Kidney (tissue), 22 donors: ENCODE measurements at regions of chr17 and their contacts with region 1.

Region 1: DNA sequence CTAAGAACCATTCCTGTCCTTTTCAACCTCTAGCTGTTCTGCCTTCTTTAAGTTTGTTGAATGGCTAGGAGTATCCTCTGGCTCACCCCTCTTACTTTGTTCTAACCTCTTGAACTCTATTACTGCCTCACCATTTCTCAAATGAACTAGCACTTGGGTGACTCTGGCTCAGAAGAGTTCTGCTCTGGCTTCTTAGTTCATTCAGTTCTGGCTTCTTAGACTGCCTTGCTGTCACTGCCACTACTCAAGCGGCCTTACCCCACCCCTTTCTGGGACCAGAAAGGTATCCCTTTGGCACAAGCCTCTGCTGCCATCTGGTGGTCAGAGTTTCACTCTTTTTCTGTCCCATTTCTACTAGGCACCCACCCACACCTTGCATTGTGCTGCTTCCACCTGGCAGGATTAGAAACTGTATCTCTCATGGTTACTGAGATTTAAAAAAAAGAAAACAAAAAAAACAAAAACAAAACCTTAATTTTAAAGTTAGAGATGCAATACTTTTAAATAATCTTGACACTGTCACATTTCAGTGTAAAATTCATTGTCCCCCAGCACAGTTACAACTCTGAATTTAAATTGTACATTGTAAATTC is 6.8 kb upstream of the ABCA10 start:
- DNase-seq: peak; percentile 83 to 94 (median 88)
- H3K4me3 ChIP-seq: no peak overlapping the region
- H3K27ac ChIP-seq: no peak overlapping the region
- H3K4me1 ChIP-seq: no peaks in the 10 kb centered on the region
- H3K27me3 ChIP-seq: no peaks in the 10 kb centered on the region
- CTCF ChIP-seq: peak; percentile 76

Region 2: GRCh38 chr17:68771867-68772515 is 463.4 kb before region 1 on chr17:
- intact Hi-C with region 1: loop called (anchors 5 kb)
- DNase-seq: peak in 2 of 5 donors; percentile 72 to 81
- H3K4me3 ChIP-seq: peak overlapping the region in 2 of 3 donors; percentile 20 to 48
- H3K27ac ChIP-seq: peak overlapping the region in 1 of 2 donors; percentile 37
- H3K4me1 ChIP-seq: no peaks in the 10 kb centered on the region
- H3K27me3 ChIP-seq: no peaks in the 10 kb centered on the region
- CTCF ChIP-seq: peak; percentile 73

Region 3: GRCh38 chr17:68777243-68777855 is 458.1 kb before region 1 on chr17:
- intact Hi-C with region 1: loop called (anchors 5 kb)
- DNase-seq: peak in 4 of 5 donors; percentile 46 to 91 (median 68)
- H3K4me3 ChIP-seq: no peak overlapping the region
- H3K27ac ChIP-seq: peak overlapping the region in 1 of 2 donors; percentile 13
- H3K4me1 ChIP-seq: peaks cover 0 to 3% (median 0%) of the 10 kb centered on the region in 3 donors
- H3K27me3 ChIP-seq: no peaks in the 10 kb centered on the region
- CTCF ChIP-seq: peak; percentile 78

Region 4: DNA sequence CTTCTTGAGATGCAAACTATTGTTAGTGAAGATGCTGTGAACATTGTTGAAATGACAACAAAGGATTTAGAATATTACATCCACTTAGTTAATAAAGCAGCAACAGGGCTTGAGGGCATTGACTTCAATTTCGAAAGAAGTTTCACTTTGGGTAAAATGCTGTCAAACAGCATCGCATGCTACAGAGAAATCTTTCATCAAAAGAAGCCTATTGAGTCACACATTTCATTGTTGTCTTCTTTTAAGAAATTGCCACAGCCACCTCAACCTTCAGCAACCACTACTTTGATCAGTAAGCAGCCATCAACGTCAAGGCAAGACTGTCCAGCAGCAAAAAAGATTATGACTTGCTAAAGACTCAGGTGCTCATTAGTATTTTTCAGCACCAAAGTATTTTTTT is 165.8 kb after region 1 on chr17:
- intact Hi-C with region 1: no loop called
- DNase-seq: no peak
- H3K4me3 ChIP-seq: no peak overlapping the region
- H3K27ac ChIP-seq: no peak overlapping the region
- H3K4me1 ChIP-seq: no peaks in the 10 kb centered on the region
- H3K27me3 ChIP-seq: no peaks in the 10 kb centered on the region
- CTCF ChIP-seq: no peak